Right ventricle myocardium superior (tissue), 1 donor: ENCODE measurements at regions of chr5 and their contacts with region 1.

Region 1: GRCh38 chr5:112146323-112147226 is 272.5 kb downstream of the EPB41L4A start:
- DNase-seq: no peak
- ATAC-seq: peak; percentile 91

Region 2: GRCh38 chr5:111158105-111158744 is 988.4 kb before region 1 on chr5:
- intact Hi-C with region 1: loop called (anchors 5 kb)
- DNase-seq: no peak
- ATAC-seq: peak; percentile 67

Region 3: GRCh38 chr5:111530298-111530740 is 616.3 kb before region 1 on chr5:
- intact Hi-C with region 1: loop called (anchors 5 kb)
- DNase-seq: peak; percentile 80
- ATAC-seq: peak; percentile 89

Region 4: DNA sequence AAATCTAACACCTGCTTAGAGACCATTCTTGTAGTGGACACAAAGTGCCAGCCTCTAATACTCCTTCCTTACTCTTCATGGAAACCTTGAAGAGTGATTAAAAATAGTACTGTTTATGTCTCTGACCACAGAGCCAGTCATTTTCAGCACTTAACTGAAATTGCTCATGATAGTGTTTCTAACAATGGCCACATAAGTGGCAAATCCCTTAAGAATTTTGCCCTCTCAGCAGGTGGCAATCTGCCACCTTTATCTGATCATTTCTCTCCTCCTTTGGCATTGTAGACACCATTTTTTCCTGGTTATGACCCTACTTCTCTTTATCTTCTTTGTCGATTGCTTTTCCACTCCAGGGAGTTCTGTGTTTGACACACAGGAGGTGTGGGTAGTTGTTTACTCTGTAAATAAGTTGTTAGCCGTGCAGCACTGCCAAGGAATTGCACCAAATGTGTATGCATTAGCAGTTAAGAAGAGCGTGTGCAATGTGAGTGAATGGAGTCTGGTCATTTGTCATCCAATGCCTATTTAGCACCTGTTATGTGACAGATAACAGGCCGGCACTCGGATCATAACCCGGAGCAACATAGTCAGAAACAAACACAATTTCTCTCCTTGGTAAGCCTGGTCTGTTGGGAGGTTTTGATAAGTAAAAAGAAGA is 597.5 kb before region 1 on chr5:
- intact Hi-C with region 1: loop called (anchors 5 kb)
- DNase-seq: no peak
- ATAC-seq: peak; percentile 50